ENCODE measurements at regions of chr4 and their contacts with region 1.

Region 1: GRCh38 chr4:118270492-118270891 is 82.3 kb downstream of the PRSS12 start:
- DNase-seq: peak in 2 of 9 experiments; percentile 62 to 70
- ATAC-seq: peak; percentile 49
- H3K4me3 ChIP-seq: no peak overlapping the region
- H3K4me3 Mint-ChIP-seq: no peak overlapping the region
- H3K27ac ChIP-seq: no peak overlapping the region
- H3K27ac Mint-ChIP-seq: no peak overlapping the region
- H3K4me1 ChIP-seq: no peaks in the 10 kb centered on the region
- H3K4me1 Mint-ChIP-seq: peaks cover 2% of the 10 kb centered on the region
- H3K27me3 ChIP-seq: no peaks in the 10 kb centered on the region
- H3K27me3 Mint-ChIP-seq: peaks cover 2% of the 10 kb centered on the region
- CTCF ChIP-seq: peak; percentile 91

Region 2: GRCh38 chr4:117477925-117478324 is 792.6 kb before region 1 on chr4:
- CTCF ChIA-PET with region 1: no interaction called
- POLR2A ChIA-PET with region 1: no interaction called
- intact Hi-C with region 1: no loop called
- DNase-seq: no peak
- ATAC-seq: no peak
- H3K4me3 ChIP-seq: no peak overlapping the region
- H3K4me3 Mint-ChIP-seq: no peak overlapping the region
- H3K27ac ChIP-seq: no peak overlapping the region
- H3K27ac Mint-ChIP-seq: no peak overlapping the region
- H3K4me1 ChIP-seq: no peaks in the 10 kb centered on the region
- H3K4me1 Mint-ChIP-seq: no peaks in the 10 kb centered on the region
- H3K27me3 ChIP-seq: no peaks in the 10 kb centered on the region
- H3K27me3 Mint-ChIP-seq: no peaks in the 10 kb centered on the region
- CTCF ChIP-seq: no peak

Region 3: GRCh38 chr4:118076958-118077766 is 193.3 kb before region 1 on chr4:
- CTCF ChIA-PET with region 1: interaction called, 3 read pairs
- POLR2A ChIA-PET with region 1: no interaction called
- intact Hi-C with region 1: loop called (anchors 5 kb)
- DNase-seq: peak in 2 of 9 experiments; percentile 1 to 2
- ATAC-seq: no peak
- H3K4me3 ChIP-seq: no peak overlapping the region
- H3K4me3 Mint-ChIP-seq: no peak overlapping the region
- H3K27ac ChIP-seq: no peak overlapping the region
- H3K27ac Mint-ChIP-seq: no peak overlapping the region
- H3K4me1 ChIP-seq: no peaks in the 10 kb centered on the region
- H3K4me1 Mint-ChIP-seq: no peaks in the 10 kb centered on the region
- H3K27me3 ChIP-seq: no peaks in the 10 kb centered on the region
- H3K27me3 Mint-ChIP-seq: no peaks in the 10 kb centered on the region
- CTCF ChIP-seq: no peak

Measured in CD8-positive, alpha-beta T cell (primary cell).